ENCODE measurements at regions of chr4 and their contacts with region 1.

Region 1: GRCh38 chr4:56530269-56531148 is 24.9 kb downstream of the ARL9 start:
- DNase-seq: peak; percentile 55
- H3K4me3 ChIP-seq: peak overlapping the region; percentile 54 to 55 (median 54)
- H3K27ac ChIP-seq: no peak overlapping the region
- H3K4me1 ChIP-seq: peaks cover 11% of the 10 kb centered on the region
- H3K27me3 ChIP-seq: peaks cover 7% of the 10 kb centered on the region
- CTCF ChIP-seq: no peak

Region 2: GRCh38 chr4:56311299-56312186 is 219.0 kb before region 1 on chr4:
- CTCF ChIA-PET with region 1: no interaction called
- dilution Hi-C with region 1: no loop called
- in situ Hi-C with region 1: no loop called
- intact Hi-C with region 1: loop called (anchors 10 kb)
- DNase-seq: no peak
- H3K4me3 ChIP-seq: no peak overlapping the region
- H3K27ac ChIP-seq: no peak overlapping the region
- H3K4me1 ChIP-seq: peaks cover 10% of the 10 kb centered on the region
- H3K27me3 ChIP-seq: no peaks in the 10 kb centered on the region
- CTCF ChIP-seq: no peak

Measured in mammary epithelial cell (primary cell).